ENCODE measurements at regions of chr7 and their contacts with region 1.

Region 1: GRCh38 chr7:100803398-100804233 is 23.7 kb downstream of the EPHB4 start:
- DNase-seq: no peak
- ATAC-seq: peak; percentile 63
- H3K4me3 ChIP-seq: no peak overlapping the region
- H3K27ac ChIP-seq: peak overlapping the region; percentile 99
- H3K4me1 ChIP-seq: peaks cover 59% of the 10 kb centered on the region
- H3K27me3 ChIP-seq: no peaks in the 10 kb centered on the region
- CTCF ChIP-seq: no peak

Region 2: DNA sequence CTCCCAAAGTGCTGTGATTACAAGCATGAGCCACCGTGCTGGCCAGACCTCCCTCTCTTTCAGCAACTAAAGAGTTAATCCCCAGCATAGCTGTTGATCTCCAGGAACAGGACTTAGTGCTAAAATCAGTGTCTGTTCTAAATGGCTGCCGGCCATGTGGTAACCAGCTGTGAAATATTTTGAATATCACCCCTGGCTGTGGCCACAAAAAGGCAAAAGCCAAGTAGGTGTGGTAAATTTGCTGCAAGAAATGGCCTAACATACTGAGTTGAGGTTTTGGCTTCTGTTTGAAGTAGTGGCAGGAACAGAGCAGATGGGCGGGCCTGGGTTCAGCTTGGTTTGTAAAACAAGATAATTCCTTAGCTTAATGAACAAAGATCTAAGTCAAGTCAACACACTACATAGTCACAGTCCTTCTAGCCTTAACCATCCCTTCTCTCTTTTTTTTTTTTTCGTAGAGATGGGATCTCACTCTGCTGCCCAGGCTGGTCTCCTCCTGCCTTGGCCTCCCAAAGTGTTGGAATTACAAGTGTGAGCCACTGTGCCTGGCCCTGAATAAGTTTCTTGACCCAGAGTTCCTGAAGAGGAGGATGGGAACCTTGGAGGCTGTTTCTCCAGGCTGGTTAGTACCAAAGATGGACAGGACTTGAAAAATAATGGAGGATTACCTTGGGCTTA is 287.3 kb before region 1 on chr7:
- CTCF ChIA-PET with region 1: no interaction called
- POLR2A ChIA-PET with region 1: no interaction called
- in situ Hi-C with region 1: no loop called
- intact Hi-C with region 1: no loop called
- DNase-seq: no peak
- ATAC-seq: peak; percentile 59; the same call in 1 of the 2 replicates
- H3K4me3 ChIP-seq: no peak overlapping the region
- H3K27ac ChIP-seq: 0 out of 2 replicates have a peak overlapping the region, but pooled peaks have one; percentile 6
- H3K4me1 ChIP-seq: no peaks in the 10 kb centered on the region
- H3K27me3 ChIP-seq: no peaks in the 10 kb centered on the region
- CTCF ChIP-seq: no peak

Region 3: GRCh38 chr7:100719523-100720319 is 83.9 kb before region 1 on chr7:
- CTCF ChIA-PET with region 1: interaction called, 7 read pairs
- POLR2A ChIA-PET with region 1: no interaction called
- in situ Hi-C with region 1: no loop called
- intact Hi-C with region 1: loop called (anchors 10 kb)
- DNase-seq: no peak
- ATAC-seq: peak; percentile 74
- H3K4me3 ChIP-seq: no peak overlapping the region
- H3K27ac ChIP-seq: no peak overlapping the region
- H3K4me1 ChIP-seq: no peaks in the 10 kb centered on the region
- H3K27me3 ChIP-seq: no peaks in the 10 kb centered on the region
- CTCF ChIP-seq: no peak

Region 4: GRCh38 chr7:100763556-100764140 is 40.0 kb before region 1 on chr7:
- CTCF ChIA-PET with region 1: interaction called, 10 read pairs
- POLR2A ChIA-PET with region 1: no interaction called
- in situ Hi-C with region 1: no loop called
- intact Hi-C with region 1: no loop called
- DNase-seq: no peak
- ATAC-seq: no peak
- H3K4me3 ChIP-seq: no peak overlapping the region
- H3K27ac ChIP-seq: no peak overlapping the region
- H3K4me1 ChIP-seq: no peaks in the 10 kb centered on the region
- H3K27me3 ChIP-seq: no peaks in the 10 kb centered on the region
- CTCF ChIP-seq: no peak

Measured in Panc1 (cell line).